H1 (cell line): ENCODE measurements at regions of chr14 and their contacts with region 1.

Region 1: DNA sequence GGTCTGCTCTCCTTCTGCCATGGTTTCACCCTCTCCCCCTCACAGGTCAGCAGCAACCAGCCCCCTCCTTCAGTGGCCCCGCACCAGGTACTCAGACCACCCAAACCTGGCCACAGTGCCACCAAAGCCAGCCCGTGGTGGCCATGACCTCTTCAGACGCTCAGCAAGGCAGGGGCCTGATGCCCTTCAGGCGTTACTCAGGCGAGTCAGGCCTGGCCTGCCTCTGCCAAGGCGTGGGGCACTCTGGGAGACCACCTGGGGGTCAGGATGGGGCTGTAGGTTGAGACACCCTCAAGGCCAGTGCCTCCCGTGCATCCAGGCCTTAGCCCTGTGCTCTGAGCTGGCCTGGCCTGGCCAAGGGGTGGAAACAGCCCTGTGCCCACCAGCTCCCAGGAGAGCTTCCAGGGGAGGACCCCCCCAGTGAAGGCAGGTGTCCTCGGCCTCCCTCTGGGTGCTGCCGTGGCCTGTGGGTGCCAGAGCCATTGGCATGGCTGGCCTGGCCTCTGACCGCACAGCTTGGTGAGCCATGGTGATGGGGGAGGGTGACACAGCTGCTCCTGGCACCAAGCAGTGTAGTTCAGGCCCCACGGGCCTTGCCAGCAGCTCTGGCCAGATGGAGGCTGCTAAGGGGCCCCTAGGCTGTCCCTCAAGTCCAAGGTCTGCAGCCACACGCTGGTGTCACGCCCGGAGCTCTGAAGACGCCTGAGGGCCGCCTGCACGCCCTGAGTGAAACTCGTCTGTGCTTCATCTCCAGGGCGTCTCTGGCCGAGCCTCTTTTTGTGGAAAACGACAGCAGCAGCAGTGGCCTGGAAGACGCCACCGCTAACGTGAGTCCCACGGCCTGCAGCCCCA is 15.1 kb downstream of the XRCC3 start:
- DNase-seq: no peak
- H3K4me3 ChIP-seq: no peak overlapping the region
- H3K27ac ChIP-seq: no peak overlapping the region; the same call in 1 of the 2 replicates
- H3K4me1 ChIP-seq: peaks cover 0 to 2% (median 0%) of the 10 kb centered on the region in 4 experiments; a peak in 2 of 7 replicates
- H3K27me3 ChIP-seq: no peaks in the 10 kb centered on the region
- CTCF ChIP-seq: no peak
- EP300 ChIP-seq: no peak
- POLR2A ChIP-seq: no peak; a peak in 1 of 3 replicates
- RAD21 ChIP-seq: no peak

Region 2: GRCh38 chr14:103688906-103689902 is 10.9 kb before region 1 on chr14:
- CTCF ChIA-PET with region 1: interaction called, 5 read pairs
- POLR2A ChIA-PET with region 1: interaction called, 74 read pairs
- DNase-seq: no peak
- H3K4me3 ChIP-seq: no peak overlapping the region
- H3K27ac ChIP-seq: no peak overlapping the region
- H3K4me1 ChIP-seq: peaks cover 0 to 3% (median 0%) of the 10 kb centered on the region in 4 experiments; a peak in 1 of 7 replicates
- H3K27me3 ChIP-seq: no peaks in the 10 kb centered on the region
- CTCF ChIP-seq: no peak
- EP300 ChIP-seq: no peak
- POLR2A ChIP-seq: no peak
- RAD21 ChIP-seq: no peak

Region 3: DNA sequence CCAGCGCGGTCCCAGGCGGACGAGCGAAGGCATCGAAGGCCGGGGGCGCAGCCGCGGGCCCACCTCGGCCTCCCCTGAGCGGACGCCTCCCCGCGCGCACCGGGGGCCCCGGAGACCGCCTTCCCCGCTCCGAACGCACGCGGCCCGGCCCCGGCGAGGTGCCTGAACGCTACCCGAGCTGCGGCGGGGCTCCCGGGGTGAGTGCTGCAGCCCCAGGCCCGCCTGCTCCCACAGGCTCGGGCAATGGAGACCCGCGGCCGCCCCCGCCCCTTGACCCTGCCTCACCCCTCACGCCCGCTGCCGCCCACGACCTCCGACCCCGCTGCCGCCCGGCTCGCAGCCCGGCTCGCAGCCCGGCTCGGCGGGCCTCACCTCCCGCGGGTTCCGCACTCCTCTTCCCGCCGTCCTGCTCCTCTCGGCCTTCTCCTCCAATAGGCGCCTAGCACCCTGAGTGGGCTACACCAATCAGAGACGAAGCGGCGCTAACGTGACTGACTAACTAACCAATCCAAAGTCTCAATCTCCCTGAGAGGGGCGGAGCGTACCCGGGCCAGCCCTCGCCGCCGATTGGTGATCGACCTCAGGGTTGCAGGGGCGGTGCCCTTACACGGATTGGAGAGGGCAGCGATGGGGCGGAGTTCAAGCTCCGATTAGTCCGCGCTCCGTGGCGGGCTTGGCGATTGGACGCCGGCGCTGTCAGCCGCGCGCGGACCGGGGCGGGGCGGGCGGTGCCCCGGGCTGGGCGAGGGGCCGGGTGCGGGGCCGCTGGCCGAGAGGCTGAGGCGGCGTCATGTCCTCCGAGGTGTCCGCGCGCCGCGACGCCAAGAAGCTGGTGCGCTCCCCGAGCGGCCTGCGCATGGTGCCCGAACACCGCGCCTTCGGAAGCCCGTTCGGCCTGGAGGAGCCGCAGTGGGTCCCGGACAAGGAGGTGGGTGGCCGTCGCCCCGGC is 15.2 kb after region 1 on chr14 and contains the starts of genes XRCC3 and ZFYVE21:
- CTCF ChIA-PET with region 1: interaction called, 8 read pairs
- POLR2A ChIA-PET with region 1: interaction called, 16 read pairs
- DNase-seq: peak; percentile 99
- H3K4me3 ChIP-seq: peak within 1 kb of the TSS; percentile 63 to 86 (median 76)
- H3K27ac ChIP-seq: peak within 1 kb of the TSS; percentile 81; the same call in 1 of the 2 replicates
- H3K4me1 ChIP-seq: peaks cover 0 to 17% (median 8%) of the 10 kb centered on the region in 4 experiments; a peak in 6 of 7 replicates
- H3K27me3 ChIP-seq: no peaks in the 10 kb centered on the region
- CTCF ChIP-seq: no peak
- EP300 ChIP-seq: no peak
- POLR2A ChIP-seq: peak in 1 of 2 experiments; percentile 81; a peak in 2 of 3 replicates
- RAD21 ChIP-seq: no peak; a peak in 1 of 4 replicates
- total RNA-seq, gene XRCC3: 41.7 and 41.8 TPM in 2 replicates
- total RNA-seq, gene ZFYVE21: 44.3 and 53.4 TPM in 2 replicates

Region 4: DNA sequence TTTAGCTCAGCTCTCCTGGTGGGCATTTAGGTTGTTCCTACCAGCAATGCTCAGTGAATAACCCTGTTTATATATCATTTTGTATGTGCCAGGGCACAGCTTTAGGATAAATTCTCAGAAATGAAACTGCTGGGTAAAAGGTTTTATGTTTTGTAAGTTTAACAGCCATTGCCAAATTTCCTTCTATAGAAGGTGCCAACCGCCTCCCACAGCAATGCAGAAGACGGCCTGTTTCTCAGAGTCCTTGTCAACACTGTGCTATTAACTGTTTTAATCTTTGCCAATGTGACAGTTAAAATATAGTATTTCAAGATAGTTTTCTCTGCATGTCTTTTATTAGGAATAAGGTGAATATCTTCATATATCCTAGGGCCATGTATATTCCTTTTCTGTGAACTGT is 82.2 kb after region 1 on chr14:
- CTCF ChIA-PET with region 1: no interaction called
- POLR2A ChIA-PET with region 1: no interaction called
- DNase-seq: no peak
- H3K4me3 ChIP-seq: no peak overlapping the region
- H3K27ac ChIP-seq: no peak overlapping the region
- H3K4me1 ChIP-seq: no peaks in the 10 kb centered on the region
- H3K27me3 ChIP-seq: no peaks in the 10 kb centered on the region
- CTCF ChIP-seq: no peak
- EP300 ChIP-seq: no peak
- POLR2A ChIP-seq: no peak
- RAD21 ChIP-seq: no peak